ENCODE measurements at regions of chr14 and their contacts with region 1.

Region 1: DNA sequence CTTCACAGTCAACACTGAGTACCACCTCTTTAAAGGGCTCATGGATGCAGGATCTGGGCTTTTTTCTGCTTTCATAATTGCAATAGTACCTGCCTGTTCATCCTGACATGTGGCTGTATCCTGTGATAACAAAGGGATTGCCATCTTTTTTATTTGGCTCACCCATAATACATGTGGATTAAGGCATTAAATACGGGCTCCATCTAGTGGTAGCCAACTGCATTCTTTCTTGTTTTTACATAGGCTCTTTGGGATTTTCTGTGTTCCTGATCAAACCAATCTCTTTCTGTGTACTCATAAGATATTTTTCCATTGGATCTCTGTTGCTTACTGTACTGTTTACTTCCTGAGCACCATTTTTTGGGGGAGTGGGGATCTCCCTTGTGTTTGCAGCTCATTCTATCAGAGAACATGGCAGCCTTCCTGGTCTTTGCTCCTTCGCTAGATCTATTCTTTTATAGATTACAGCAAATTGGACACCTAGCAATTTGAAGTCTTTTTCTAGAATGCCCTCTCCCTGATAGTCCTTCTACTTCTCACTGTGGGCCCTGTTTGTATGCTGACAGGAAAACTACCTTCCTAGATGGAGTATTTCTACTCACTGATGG is 723.4 kb upstream of the MDGA2 start:
- DNase-seq: no peak
- ATAC-seq: peak in 3 of 4 donors; percentile 60 to 62 (median 60)
- H3K4me3 ChIP-seq: no peak overlapping the region
- H3K27ac ChIP-seq: no peak overlapping the region
- H3K4me1 ChIP-seq: no peaks in the 10 kb centered on the region
- H3K27me3 ChIP-seq: peaks cover 0 to 4% (median 0%) of the 10 kb centered on the region in 4 donors
- CTCF ChIP-seq: peak; percentile 27 to 65 (median 54)

Region 2: GRCh38 chr14:47929334-47929733 is 469.4 kb before region 1 on chr14:
- intact Hi-C with region 1: loop called in 1 of 3 experiments (anchors 10 kb)
- DNase-seq: no peak
- ATAC-seq: no peak
- H3K4me3 ChIP-seq: no peak overlapping the region
- H3K27ac ChIP-seq: no peak overlapping the region
- H3K4me1 ChIP-seq: no peaks in the 10 kb centered on the region
- H3K27me3 ChIP-seq: no peaks in the 10 kb centered on the region
- CTCF ChIP-seq: no peak

Region 3: DNA sequence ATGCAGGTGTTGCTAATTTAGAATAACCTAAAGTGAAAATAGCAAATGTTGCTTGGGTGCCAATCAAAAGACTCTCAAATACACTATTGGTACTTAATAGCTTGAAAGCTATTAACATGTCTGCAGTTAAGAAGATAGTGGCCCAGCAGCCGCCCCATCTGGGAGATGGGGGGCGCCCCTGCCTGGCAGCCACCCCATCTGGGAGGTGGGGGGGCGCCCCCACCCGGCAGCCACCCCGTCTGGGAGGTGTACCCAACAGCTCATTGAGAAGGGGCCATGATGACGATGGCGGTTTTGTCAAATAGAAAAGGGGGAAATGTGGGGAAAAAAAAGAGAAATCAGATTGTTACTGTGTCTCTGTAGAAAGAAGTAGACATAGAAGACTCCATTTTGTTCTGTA is 199.7 kb after region 1 on chr14:
- intact Hi-C with region 1: no loop called
- DNase-seq: peak in 1 of 6 donors; percentile 13
- ATAC-seq: no peak
- H3K4me3 ChIP-seq: no peak overlapping the region
- H3K27ac ChIP-seq: no peak overlapping the region
- H3K4me1 ChIP-seq: no peaks in the 10 kb centered on the region
- H3K27me3 ChIP-seq: no peaks in the 10 kb centered on the region
- CTCF ChIP-seq: no peak

Measured in pancreas (tissue), 10 donors.